ENCODE measurements at regions of chr18 and their contacts with region 1.

Region 1: DNA sequence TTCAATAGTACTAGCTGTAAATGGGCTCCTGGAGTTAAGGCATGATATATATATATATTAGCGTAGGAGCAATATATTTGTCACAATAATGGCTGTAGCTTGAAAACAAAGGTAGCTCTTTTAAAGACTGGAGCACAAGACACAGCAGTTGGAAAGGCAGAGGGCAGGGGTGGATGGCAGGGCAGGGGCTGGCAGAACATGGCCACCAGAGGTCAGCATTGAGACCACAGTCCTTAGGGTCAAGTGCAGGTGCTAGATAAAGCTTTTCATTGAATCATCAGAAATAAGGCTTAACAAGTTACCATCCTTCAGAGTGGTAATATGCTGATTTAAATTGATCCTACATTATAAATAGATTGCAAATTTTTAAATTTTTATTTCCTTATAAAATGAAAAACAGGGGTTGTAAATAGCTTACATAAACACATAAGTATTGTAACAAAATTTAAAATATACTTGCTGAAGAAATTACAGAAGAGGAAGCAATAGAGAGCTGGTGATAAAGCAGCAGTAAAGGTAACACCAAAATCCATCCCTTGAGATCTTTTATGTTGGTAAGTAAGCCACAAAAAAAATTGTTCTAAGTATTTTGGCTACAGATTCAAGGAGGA is 161.2 kb upstream of the PIEZO2 start:
- DNase-seq: peak; percentile 40
- ATAC-seq: peak; percentile 85
- H3K4me3 ChIP-seq: no peak overlapping the region
- H3K27ac ChIP-seq: no peak overlapping the region
- H3K4me1 ChIP-seq: no peaks in the 10 kb centered on the region
- H3K27me3 ChIP-seq: no peaks in the 10 kb centered on the region; a peak in 1 of 5 replicates
- CTCF ChIP-seq: peak; percentile 77
- EP300 ChIP-seq: no peak
- POLR2A ChIP-seq: no peak
- RAD21 ChIP-seq: peak; percentile 68

Region 2: DNA sequence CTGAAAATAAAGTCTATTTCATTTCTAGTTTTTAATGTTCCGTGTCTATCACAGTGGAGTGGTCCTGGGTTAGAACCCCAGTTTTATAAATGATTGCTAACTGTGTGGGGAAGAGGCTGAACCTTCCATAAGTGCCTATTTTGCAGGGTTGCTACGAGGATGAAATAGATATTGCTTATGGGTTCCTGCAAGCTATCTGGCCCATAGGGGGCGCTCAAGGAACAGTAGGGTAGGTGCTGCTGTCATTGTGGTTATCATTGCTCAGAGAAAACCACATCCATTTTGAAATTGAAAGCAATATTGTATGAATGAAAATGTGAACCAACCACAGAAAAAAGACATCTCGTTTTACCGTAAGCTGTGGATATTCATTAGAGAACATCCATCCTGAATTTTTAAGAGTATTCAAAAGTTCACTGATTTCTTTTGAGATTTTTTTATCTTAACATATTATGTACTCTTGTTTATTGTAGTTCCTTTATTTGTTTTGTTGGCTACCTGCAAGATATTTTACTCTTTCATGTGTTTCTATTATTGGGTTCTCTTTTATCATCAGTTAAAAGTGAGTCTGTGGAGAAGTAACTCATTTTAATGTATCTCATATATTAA is 523.2 kb before region 1 on chr18:
- CTCF ChIA-PET with region 1: interaction called, 3 read pairs
- POLR2A ChIA-PET with region 1: no interaction called
- in situ Hi-C with region 1: no loop called
- intact Hi-C with region 1: loop called (anchors 1 kb)
- DNase-seq: peak; percentile 73
- ATAC-seq: peak; percentile 71
- H3K4me3 ChIP-seq: no peak overlapping the region
- H3K27ac ChIP-seq: no peak overlapping the region
- H3K4me1 ChIP-seq: no peaks in the 10 kb centered on the region
- H3K27me3 ChIP-seq: no peaks in the 10 kb centered on the region
- CTCF ChIP-seq: peak; percentile 76
- EP300 ChIP-seq: no peak
- POLR2A ChIP-seq: no peak
- RAD21 ChIP-seq: peak; percentile 38; the same call in 1 of the 2 replicates

Region 3: GRCh38 chr18:10851824-10852319 is 458.7 kb before region 1 on chr18:
- CTCF ChIA-PET with region 1: no interaction called
- POLR2A ChIA-PET with region 1: no interaction called
- in situ Hi-C with region 1: no loop called
- intact Hi-C with region 1: loop called (anchors 5 kb)
- DNase-seq: peak; percentile 57
- ATAC-seq: no peak
- H3K4me3 ChIP-seq: no peak overlapping the region
- H3K27ac ChIP-seq: no peak overlapping the region
- H3K4me1 ChIP-seq: peaks cover 28% of the 10 kb centered on the region
- H3K27me3 ChIP-seq: no peaks in the 10 kb centered on the region; a peak in 1 of 5 replicates
- CTCF ChIP-seq: peak; percentile 72
- EP300 ChIP-seq: no peak
- POLR2A ChIP-seq: no peak
- RAD21 ChIP-seq: peak; percentile 83

Region 4: GRCh38 chr18:11224153-11224552 is 86.4 kb before region 1 on chr18:
- CTCF ChIA-PET with region 1: no interaction called
- POLR2A ChIA-PET with region 1: no interaction called
- in situ Hi-C with region 1: no loop called
- intact Hi-C with region 1: no loop called
- DNase-seq: no peak
- ATAC-seq: no peak
- H3K4me3 ChIP-seq: no peak overlapping the region
- H3K27ac ChIP-seq: no peak overlapping the region
- H3K4me1 ChIP-seq: no peaks in the 10 kb centered on the region
- H3K27me3 ChIP-seq: peaks cover 0 to 9% of the 10 kb centered on the region in 2 experiments; a peak in 2 of 5 replicates
- CTCF ChIP-seq: no peak
- EP300 ChIP-seq: no peak
- POLR2A ChIP-seq: no peak
- RAD21 ChIP-seq: no peak

Region 5: GRCh38 chr18:11437046-11437445 is 126.5 kb after region 1 on chr18:
- CTCF ChIA-PET with region 1: no interaction called
- POLR2A ChIA-PET with region 1: no interaction called
- in situ Hi-C with region 1: no loop called
- intact Hi-C with region 1: no loop called
- DNase-seq: no peak
- ATAC-seq: no peak
- H3K4me3 ChIP-seq: no peak overlapping the region
- H3K27ac ChIP-seq: no peak overlapping the region
- H3K4me1 ChIP-seq: no peaks in the 10 kb centered on the region
- H3K27me3 ChIP-seq: no peaks in the 10 kb centered on the region
- CTCF ChIP-seq: no peak
- EP300 ChIP-seq: no peak
- POLR2A ChIP-seq: no peak
- RAD21 ChIP-seq: no peak

Region 6: DNA sequence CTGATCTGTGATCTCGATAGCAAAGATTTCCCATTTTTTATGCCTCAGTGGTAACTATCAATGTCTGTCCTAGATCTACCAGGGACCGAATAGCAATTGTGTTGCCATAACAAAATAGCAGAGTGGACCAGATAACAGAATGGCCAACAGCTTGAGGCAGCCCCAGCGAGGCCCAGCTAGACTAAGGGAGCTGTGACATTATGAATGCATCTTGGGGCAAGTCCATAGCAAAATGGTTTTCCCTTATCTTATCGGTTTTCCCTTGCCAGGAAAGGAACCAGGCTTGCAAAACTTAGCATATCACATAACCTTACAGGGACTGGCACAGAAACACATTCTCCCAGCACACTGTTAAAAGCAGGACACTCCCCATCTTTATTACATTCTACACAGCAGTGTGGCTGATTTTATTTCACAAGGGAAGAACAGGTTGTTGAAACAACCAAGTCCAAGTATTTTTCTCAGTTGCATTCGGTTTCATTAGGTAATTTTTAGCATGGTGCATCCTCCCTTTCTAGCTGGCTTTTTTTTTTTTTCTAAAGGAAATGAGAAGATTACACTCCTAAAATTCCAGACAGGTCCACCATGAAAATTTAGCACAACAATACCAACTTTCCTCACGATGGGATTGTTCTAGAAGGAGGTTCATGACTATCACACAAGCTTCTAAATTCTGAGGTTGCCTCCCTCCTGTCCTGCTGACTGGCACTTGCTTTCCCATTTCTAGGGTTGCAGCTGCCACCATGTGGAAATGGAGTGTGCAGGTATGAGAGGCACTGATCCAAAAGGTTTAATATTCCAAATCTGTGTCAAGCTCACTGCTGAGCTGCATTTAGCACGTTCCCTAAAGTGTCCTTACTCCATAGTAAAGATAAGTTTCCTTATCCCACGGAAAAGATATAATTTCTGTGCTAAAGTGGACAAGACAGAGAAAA is 201.8 kb after region 1 on chr18:
- CTCF ChIA-PET with region 1: interaction called, 15 read pairs
- POLR2A ChIA-PET with region 1: no interaction called
- in situ Hi-C with region 1: loop called (anchors 5 kb)
- intact Hi-C with region 1: loop called (anchors 1 kb)
- DNase-seq: peak; percentile 68
- ATAC-seq: peak; percentile 91
- H3K4me3 ChIP-seq: no peak overlapping the region
- H3K27ac ChIP-seq: no peak overlapping the region
- H3K4me1 ChIP-seq: peaks cover 27% of the 10 kb centered on the region
- H3K27me3 ChIP-seq: no peaks in the 10 kb centered on the region
- CTCF ChIP-seq: peak; percentile 85
- EP300 ChIP-seq: no peak
- POLR2A ChIP-seq: no peak
- RAD21 ChIP-seq: peak; percentile 87

Region 7: DNA sequence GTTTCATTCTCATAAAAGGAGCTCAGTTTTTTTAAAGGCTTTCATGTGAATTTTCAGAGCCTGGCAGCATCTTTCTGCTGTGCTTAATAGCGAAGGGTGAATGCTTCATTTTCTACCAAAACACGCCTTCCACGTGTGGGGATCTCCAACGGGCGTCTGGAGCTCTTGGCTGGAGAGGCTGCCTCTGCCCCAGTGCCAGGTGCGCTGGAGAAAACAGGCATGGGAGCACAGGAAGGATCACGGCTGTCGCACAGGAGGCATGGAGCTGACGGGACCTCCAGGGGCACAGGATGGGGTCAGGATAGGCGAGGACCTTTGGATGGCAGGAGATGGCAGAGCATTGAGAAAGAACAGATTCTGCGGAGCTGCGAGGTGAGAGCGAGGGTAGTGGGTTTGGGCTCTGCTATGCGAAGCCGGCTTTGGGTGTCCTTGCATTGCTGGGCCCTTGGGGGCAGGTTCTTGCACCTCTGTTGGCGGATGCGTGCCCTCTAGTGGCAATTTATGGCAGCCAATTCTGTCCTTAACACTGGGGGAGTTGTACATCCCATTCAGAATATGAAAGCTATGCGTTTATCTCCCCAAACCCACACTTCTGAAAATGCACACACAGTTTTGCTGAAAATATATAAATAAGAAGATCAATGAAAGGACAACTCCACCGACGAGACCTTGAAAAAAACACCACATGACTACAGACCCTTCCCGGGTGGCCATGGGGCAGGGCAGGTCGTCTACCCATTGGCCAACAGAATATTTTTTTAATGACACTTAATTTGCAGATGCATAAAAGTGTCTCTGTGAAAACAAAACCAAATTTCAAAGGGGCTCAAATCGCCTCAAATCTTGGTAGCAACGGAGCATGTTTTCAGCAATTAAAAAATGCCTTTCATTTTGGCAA is 208.5 kb after region 1 on chr18:
- CTCF ChIA-PET with region 1: interaction called, 26 read pairs
- POLR2A ChIA-PET with region 1: no interaction called
- in situ Hi-C with region 1: loop called (anchors 5 kb)
- intact Hi-C with region 1: no loop called
- DNase-seq: peak; percentile 64
- ATAC-seq: peak; percentile 99
- H3K4me3 ChIP-seq: peak overlapping the region in 1 of 3 experiments; percentile 51; a peak in 1 of 6 replicates
- H3K27ac ChIP-seq: no peak overlapping the region
- H3K4me1 ChIP-seq: peaks cover 15% of the 10 kb centered on the region
- H3K27me3 ChIP-seq: no peaks in the 10 kb centered on the region
- CTCF ChIP-seq: peak; percentile 87
- EP300 ChIP-seq: no peak
- POLR2A ChIP-seq: no peak
- RAD21 ChIP-seq: peak; percentile 79

Region 8: DNA sequence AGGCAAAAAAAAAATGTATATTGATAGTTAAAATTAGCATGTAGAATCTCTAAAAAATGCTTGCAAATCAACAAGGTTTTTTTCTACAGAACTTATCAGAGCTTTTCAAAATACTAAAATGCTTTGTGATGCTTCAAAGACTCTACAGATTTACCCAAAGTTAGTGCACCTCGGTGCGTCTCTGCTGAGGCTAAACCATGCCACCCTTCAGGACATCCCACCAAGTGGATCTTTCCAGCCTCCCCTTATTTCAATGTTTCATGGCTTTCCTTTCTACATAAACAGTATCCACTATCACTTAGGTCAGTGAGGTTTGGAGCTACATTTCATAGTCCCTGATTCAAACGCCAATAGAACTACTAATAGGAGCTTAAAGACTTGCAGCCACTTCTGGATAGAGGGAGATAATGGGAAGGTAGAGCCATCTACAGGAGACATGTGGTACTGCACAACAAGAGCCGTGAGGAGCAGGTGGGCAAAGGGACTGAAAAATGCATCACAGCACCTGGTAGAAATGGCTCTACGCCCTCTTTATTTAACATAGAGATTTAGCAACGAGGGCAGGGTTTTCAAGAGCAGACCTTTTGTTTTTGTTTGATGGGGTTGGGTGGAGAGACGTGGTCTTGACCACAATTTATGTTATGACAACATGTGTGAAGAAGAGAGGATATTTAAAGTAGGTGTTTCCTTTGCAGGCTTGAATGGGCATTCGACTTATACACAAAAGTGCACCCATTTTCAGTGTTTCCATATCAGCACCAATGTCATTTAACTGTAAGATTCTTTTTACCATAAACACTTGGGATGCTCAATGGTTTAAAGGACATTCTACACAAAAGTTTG is 242.7 kb after region 1 on chr18:
- CTCF ChIA-PET with region 1: interaction called, 19 read pairs
- POLR2A ChIA-PET with region 1: no interaction called
- in situ Hi-C with region 1: no loop called
- intact Hi-C with region 1: loop called (anchors 1 kb)
- DNase-seq: peak; percentile 49
- ATAC-seq: peak; percentile 79
- H3K4me3 ChIP-seq: no peak overlapping the region
- H3K27ac ChIP-seq: no peak overlapping the region
- H3K4me1 ChIP-seq: no peaks in the 10 kb centered on the region
- H3K27me3 ChIP-seq: peaks cover 1 to 22% of the 10 kb centered on the region in 2 experiments; a peak in 2 of 5 replicates
- CTCF ChIP-seq: peak; percentile 86
- EP300 ChIP-seq: no peak
- POLR2A ChIP-seq: no peak
- RAD21 ChIP-seq: peak; percentile 49